ENCODE measurements at regions of chr5 and their contacts with region 1.

Region 1: DNA sequence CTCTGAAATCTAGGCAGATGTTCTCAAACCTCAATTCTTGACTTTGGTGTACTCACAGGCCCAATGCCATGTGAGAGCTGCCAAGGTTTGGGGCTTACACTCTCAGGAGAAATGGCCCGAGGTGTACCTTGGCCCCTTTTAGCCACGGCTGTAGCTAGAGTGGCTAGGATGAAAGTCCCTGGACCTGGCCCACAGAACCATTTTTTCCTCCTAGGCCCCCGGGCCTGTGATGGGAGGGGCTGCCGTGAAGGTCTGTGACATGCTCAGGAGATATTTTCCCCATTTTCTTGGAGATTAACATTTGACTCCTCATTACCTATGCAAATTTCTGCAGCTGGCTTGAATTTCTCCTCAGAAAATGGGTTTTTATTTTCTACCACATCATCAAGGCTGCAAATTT is 1296.5 kb downstream of the MAT2B start:
- DNase-seq: no peak
- ATAC-seq: no peak
- H3K4me3 ChIP-seq: no peak overlapping the region
- H3K27ac ChIP-seq: no peak overlapping the region
- H3K4me1 ChIP-seq: no peaks in the 10 kb centered on the region
- H3K27me3 ChIP-seq: no peaks in the 10 kb centered on the region
- CTCF ChIP-seq: no peak

Region 2: GRCh38 chr5:164844348-164844747 is 42.4 kb after region 1 on chr5:
- CTCF ChIA-PET with region 1: no interaction called
- POLR2A ChIA-PET with region 1: no interaction called
- in situ Hi-C with region 1: no loop called
- intact Hi-C with region 1: no loop called
- DNase-seq: no peak
- ATAC-seq: no peak
- H3K4me3 ChIP-seq: no peak overlapping the region
- H3K27ac ChIP-seq: no peak overlapping the region
- H3K4me1 ChIP-seq: no peaks in the 10 kb centered on the region
- H3K27me3 ChIP-seq: no peaks in the 10 kb centered on the region
- CTCF ChIP-seq: no peak

Region 3: GRCh38 chr5:164980480-164980879 is 178.6 kb after region 1 on chr5:
- CTCF ChIA-PET with region 1: no interaction called
- POLR2A ChIA-PET with region 1: no interaction called
- in situ Hi-C with region 1: no loop called
- intact Hi-C with region 1: no loop called
- DNase-seq: no peak
- ATAC-seq: no peak
- H3K4me3 ChIP-seq: no peak overlapping the region
- H3K27ac ChIP-seq: no peak overlapping the region
- H3K4me1 ChIP-seq: no peaks in the 10 kb centered on the region
- H3K27me3 ChIP-seq: no peaks in the 10 kb centered on the region
- CTCF ChIP-seq: no peak

Region 4: GRCh38 chr5:165360784-165361542 is 559.1 kb after region 1 on chr5:
- CTCF ChIA-PET with region 1: no interaction called
- POLR2A ChIA-PET with region 1: no interaction called
- in situ Hi-C with region 1: no loop called
- intact Hi-C with region 1: loop called (anchors 2 kb)
- DNase-seq: no peak
- ATAC-seq: no peak
- H3K4me3 ChIP-seq: no peak overlapping the region
- H3K27ac ChIP-seq: no peak overlapping the region
- H3K4me1 ChIP-seq: no peaks in the 10 kb centered on the region
- H3K27me3 ChIP-seq: no peaks in the 10 kb centered on the region
- CTCF ChIP-seq: no peak